MCF 10A (cell line): ENCODE measurements at regions of chr1 and their contacts with region 1.

Region 1: DNA sequence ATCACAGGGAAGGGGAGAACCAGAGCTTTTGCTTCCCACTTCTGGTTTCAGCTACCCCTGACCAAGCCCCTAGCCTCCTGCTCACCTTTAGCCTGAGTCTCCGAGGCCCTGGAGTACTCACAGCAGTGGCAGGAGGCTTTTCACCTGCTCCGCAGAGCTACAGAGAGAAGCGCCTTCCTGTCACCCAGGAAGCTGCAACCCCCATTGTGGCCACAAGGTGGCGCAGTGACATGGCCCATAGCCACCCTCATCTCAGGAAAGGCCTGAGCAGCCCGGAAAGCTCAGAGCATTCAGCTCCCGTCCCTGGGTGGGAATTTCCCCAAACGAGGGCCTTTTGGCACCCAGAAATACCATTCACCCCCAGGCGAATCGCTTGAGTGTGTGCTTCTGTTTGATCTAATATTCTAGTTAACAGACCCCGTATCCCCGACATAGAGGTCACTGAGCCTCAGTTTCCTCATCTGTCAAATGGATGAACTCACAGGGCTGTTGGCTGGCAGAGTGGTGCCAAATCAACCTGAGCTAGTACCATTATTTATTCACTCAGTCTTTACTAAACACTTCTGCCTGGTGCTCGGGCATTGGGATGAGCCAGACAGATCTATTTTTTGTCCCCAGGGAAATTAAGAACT is 25.3 kb downstream of the A3GALT2 start:
- DNase-seq: peak; percentile 85
- H3K4me3 Mint-ChIP-seq: no peak overlapping the region
- H3K27ac Mint-ChIP-seq: no peak overlapping the region
- H3K4me1 Mint-ChIP-seq: no peaks in the 10 kb centered on the region
- H3K27me3 Mint-ChIP-seq: no peaks in the 10 kb centered on the region
- CTCF ChIP-seq: peak; percentile 91

Region 2: DNA sequence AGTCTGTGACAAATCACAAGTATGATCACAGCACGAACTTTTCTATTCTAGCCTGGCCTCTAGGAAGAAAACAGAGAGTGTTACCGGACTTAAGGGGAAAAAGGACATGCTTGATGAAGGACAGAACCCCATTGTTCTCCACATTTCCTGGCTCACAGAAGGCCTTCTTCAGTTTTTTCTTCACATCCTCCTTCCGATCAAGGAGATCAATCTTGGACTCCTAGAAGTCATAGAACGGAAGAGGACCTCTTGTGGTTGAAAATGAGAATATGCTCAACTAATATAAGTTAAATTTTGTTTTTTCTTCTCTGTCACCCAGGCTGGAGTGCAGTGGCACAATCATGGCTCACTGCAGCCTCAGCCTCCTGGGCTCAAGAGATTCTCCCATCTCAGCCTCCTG is 508.7 kb before region 1 on chr1:
- CTCF ChIA-PET with region 1: no interaction called
- POLR2A ChIA-PET with region 1: no interaction called
- intact Hi-C with region 1: no loop called
- DNase-seq: no peak
- H3K4me3 Mint-ChIP-seq: no peak overlapping the region
- H3K27ac Mint-ChIP-seq: no peak overlapping the region
- H3K4me1 Mint-ChIP-seq: peaks cover 2% of the 10 kb centered on the region
- H3K27me3 Mint-ChIP-seq: no peaks in the 10 kb centered on the region
- CTCF ChIP-seq: no peak

Region 3: GRCh38 chr1:33161061-33161681 is 134.4 kb before region 1 on chr1:
- CTCF ChIA-PET with region 1: no interaction called
- POLR2A ChIA-PET with region 1: no interaction called
- intact Hi-C with region 1: no loop called
- DNase-seq: no peak
- H3K4me3 Mint-ChIP-seq: no peak overlapping the region
- H3K27ac Mint-ChIP-seq: no peak overlapping the region
- H3K4me1 Mint-ChIP-seq: no peaks in the 10 kb centered on the region
- H3K27me3 Mint-ChIP-seq: no peaks in the 10 kb centered on the region
- CTCF ChIP-seq: no peak

Region 4: GRCh38 chr1:33211972-33212371 is 83.6 kb before region 1 on chr1:
- CTCF ChIA-PET with region 1: interaction called, 67 read pairs
- POLR2A ChIA-PET with region 1: no interaction called
- intact Hi-C with region 1: no loop called
- DNase-seq: no peak
- H3K4me3 Mint-ChIP-seq: no peak overlapping the region
- H3K27ac Mint-ChIP-seq: no peak overlapping the region
- H3K4me1 Mint-ChIP-seq: no peaks in the 10 kb centered on the region
- H3K27me3 Mint-ChIP-seq: peaks cover 42% of the 10 kb centered on the region
- CTCF ChIP-seq: no peak

Region 5: GRCh38 chr1:33281596-33282303 is 13.8 kb before region 1 on chr1:
- CTCF ChIA-PET with region 1: interaction called, 10 read pairs
- POLR2A ChIA-PET with region 1: no interaction called
- intact Hi-C with region 1: no loop called
- DNase-seq: no peak
- H3K4me3 Mint-ChIP-seq: no peak overlapping the region
- H3K27ac Mint-ChIP-seq: peak overlapping the region; percentile 49
- H3K4me1 Mint-ChIP-seq: no peaks in the 10 kb centered on the region
- H3K27me3 Mint-ChIP-seq: no peaks in the 10 kb centered on the region
- CTCF ChIP-seq: no peak

Region 6: DNA sequence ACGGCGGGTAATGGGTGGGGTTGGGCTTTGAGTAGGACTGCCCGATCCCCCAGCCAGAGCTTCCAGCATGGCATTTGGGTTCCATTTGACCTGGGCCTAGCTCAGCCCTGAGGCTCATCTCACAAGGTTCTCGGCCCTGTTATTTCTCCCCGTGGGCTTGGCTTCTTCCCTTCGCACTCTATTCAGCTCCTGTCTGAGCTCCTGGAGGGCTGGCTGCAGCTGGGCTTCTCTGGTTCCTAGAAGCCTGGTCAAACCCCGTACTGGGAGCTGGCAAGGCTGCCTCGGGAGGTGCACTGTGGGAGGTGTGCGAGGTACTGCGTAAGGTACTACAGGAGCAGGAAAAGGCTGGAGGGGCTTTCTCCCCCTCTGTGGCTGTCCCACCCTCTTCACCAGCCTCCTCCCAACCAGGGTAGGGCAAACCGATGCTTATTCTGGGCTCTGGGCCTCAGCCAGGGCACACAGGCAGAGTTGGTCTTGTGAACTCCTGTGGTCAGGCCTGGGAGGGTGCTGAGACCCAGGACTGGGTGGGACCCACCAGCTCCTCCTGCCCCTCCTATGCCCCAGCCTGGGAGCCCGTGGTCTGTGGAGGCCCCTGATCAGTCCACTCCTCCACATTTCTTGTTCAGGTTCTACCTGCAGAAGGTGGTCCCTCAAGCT is 24.5 kb after region 1 on chr1:
- CTCF ChIA-PET with region 1: interaction called, 15 read pairs
- POLR2A ChIA-PET with region 1: interaction called, 4 read pairs
- intact Hi-C with region 1: no loop called
- DNase-seq: no peak
- H3K4me3 Mint-ChIP-seq: no peak overlapping the region
- H3K27ac Mint-ChIP-seq: no peak overlapping the region
- H3K4me1 Mint-ChIP-seq: no peaks in the 10 kb centered on the region
- H3K27me3 Mint-ChIP-seq: no peaks in the 10 kb centered on the region
- CTCF ChIP-seq: no peak

Region 7: GRCh38 chr1:33349778-33350610 is 54.4 kb after region 1 on chr1:
- CTCF ChIA-PET with region 1: interaction called, 16 read pairs
- POLR2A ChIA-PET with region 1: interaction called, 9 read pairs
- intact Hi-C with region 1: no loop called
- DNase-seq: peak; percentile 84
- H3K4me3 Mint-ChIP-seq: peak overlapping the region; percentile 87
- H3K27ac Mint-ChIP-seq: peak overlapping the region; percentile 65
- H3K4me1 Mint-ChIP-seq: peaks cover 24% of the 10 kb centered on the region
- H3K27me3 Mint-ChIP-seq: no peaks in the 10 kb centered on the region
- CTCF ChIP-seq: no peak

Region 8: GRCh38 chr1:33455539-33456501 is 160.3 kb after region 1 on chr1:
- CTCF ChIA-PET with region 1: interaction called, 19 read pairs
- POLR2A ChIA-PET with region 1: interaction called, 3 read pairs
- intact Hi-C with region 1: loop called (anchors 1 kb)
- DNase-seq: peak; percentile 86
- H3K4me3 Mint-ChIP-seq: no peak overlapping the region
- H3K27ac Mint-ChIP-seq: no peak overlapping the region
- H3K4me1 Mint-ChIP-seq: peaks cover 34% of the 10 kb centered on the region
- H3K27me3 Mint-ChIP-seq: no peaks in the 10 kb centered on the region
- CTCF ChIP-seq: peak; percentile 64

Region 9: DNA sequence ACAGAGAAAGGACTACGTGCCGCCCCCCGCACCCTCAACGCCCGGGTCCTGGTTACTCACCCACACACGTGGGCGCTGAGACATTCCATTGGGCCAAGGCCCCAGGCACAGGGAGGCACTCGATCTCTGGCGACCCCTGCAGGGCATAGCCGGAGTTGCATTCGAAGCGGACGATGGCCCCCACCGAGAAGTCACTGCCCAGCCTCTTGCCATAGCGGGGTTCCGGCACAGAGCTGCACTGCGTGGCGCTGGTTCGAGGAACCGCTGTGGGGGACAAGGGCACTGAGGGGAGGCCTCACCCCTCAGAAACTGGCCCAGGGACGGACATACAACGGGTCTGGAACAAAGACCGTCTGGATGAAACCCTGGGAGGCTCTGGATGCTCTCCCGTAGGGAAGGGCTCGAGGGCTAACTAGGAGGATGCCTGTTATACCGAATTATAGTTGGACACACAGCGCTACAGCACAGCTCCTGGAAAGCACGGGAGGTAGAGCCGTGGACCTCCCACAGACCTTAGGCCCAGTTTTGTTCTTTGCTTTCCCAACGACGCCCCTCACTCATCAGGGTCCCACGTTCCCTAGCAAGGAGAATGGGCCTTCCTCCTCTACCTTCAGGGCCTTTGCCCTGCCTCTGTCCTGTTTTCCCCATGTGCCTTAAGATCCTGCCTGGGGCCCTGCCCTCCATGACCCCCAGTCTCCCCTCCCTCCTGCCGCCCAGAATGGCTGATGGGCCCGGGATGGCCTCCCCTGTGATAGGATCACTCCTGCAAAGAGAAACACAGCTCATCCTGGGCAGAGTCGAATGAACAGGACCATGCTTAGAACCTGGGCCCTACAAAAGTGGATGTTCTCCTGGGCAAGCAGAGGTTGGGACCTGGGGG is 329.7 kb after region 1 on chr1:
- CTCF ChIA-PET with region 1: no interaction called
- POLR2A ChIA-PET with region 1: no interaction called
- intact Hi-C with region 1: no loop called
- DNase-seq: no peak
- H3K4me3 Mint-ChIP-seq: no peak overlapping the region
- H3K27ac Mint-ChIP-seq: no peak overlapping the region
- H3K4me1 Mint-ChIP-seq: no peaks in the 10 kb centered on the region
- H3K27me3 Mint-ChIP-seq: peaks cover 57% of the 10 kb centered on the region
- CTCF ChIP-seq: peak; percentile 26